ENCODE measurements at regions of chr2 and their contacts with region 1.

Region 1: DNA sequence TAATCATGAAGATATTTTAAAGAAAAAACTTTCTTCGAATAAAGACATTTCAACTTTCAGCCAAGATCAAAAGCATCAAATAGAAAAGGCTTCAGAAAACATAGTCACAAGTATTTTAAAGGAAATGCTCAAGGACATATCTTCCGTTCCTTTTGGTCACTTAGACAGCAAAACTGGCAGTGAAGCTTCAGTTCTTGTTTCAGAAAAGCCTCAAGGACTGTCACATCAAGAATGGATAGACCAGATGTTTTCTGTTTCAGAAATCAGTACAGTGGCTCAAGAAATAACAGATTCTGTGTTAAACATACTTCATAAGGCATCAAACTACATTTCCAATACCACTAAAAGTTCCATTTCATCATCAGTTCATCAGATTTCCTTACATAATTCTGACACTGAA is 51.8 kb downstream of the FSIP2 start:
- DNase-seq: no peak
- H3K4me3 Mint-ChIP-seq: no peak overlapping the region
- H3K27ac Mint-ChIP-seq: no peak overlapping the region
- H3K4me1 Mint-ChIP-seq: no peaks in the 10 kb centered on the region
- H3K27me3 Mint-ChIP-seq: no peaks in the 10 kb centered on the region

Region 2: DNA sequence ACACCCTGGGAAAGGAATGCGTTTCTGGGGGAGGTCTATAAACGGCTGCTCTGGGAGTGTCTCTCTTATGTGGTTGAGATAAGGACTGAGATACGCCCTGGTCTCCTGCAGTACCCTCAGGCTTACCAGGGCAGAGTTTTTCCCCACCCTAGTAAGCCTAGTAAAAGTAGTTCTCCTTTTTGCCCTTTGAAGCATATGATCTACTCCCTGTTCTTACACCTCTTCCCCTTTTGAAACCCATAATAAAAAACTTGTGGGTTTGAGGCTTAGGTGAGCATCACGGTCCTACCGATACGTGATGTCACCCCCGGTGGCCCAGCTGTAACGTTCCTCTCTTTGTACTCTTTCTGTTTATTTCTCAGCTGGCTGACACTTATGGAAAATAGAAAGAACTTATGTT is 45.6 kb after region 1 on chr2:
- CTCF ChIA-PET with region 1: no interaction called
- POLR2A ChIA-PET with region 1: no interaction called
- intact Hi-C with region 1: loop called (anchors 2 kb)
- DNase-seq: no peak
- H3K4me3 Mint-ChIP-seq: no peak overlapping the region
- H3K27ac Mint-ChIP-seq: no peak overlapping the region
- H3K4me1 Mint-ChIP-seq: no peaks in the 10 kb centered on the region
- H3K27me3 Mint-ChIP-seq: no peaks in the 10 kb centered on the region